WTC11 (cell line): ENCODE measurements at regions of chr5 and their contacts with region 1.

Region 1: GRCh38 chr5:80569961-80570786 is at the start of gene ANKRD34B:
- DNase-seq: peak; percentile 80
- ATAC-seq: peak; percentile 80
- H3K4me3 Mint-ChIP-seq: peak within 1 kb of the TSS; percentile 70
- H3K27ac Mint-ChIP-seq: no peak within 1 kb of the TSS
- H3K4me1 Mint-ChIP-seq: peaks cover 8% of the 10 kb centered on the region; the same call in 1 of the 2 replicates
- H3K27me3 Mint-ChIP-seq: peaks cover 96% of the 10 kb centered on the region
- CTCF ChIP-seq: no peak
- total RNA-seq, gene ANKRD34B: 1.6 to 3.6 TPM (median 3.4 TPM) in 3 replicates

Region 2: DNA sequence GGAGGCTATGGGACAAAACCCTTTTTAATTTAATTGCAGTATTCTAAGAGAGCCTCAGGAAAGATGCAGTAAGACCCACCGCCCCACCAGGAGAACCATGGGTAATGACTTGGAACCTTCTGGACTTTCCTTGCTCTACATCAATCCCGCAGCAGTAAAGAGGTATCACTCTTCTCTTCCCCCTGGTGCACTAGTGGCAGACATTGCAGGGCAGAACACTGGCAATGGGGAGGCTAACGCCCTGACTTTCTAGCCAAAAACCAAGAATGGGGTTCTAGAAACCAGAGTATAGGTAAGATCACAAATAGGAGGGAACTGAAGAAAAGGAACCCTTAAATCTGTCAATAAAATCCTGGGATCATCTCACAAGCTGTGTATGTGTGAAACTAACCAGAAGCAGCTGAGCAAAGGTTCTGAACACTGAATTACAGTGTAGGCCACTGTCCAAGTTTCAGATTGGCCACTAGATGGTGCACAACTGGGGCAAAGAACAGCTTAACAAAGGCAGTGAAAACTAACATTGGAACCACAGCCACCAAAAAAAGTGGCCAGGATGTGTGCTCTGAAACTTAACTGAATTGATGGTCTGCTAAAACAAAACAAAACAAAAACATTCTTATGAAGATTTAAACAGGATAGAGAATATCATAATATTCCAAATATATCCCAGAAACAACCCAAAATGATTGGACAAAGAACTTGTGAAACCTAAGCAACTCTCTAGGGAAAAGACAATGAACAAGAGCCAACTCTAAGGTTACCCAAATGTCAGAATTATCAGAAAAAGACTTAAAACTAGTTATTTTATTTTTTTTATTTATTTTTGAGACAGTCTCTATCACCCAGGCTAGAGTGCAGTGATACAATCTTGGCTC is 88.9 kb before region 1 on chr5:
- CTCF ChIA-PET with region 1: interaction called, 17 read pairs
- POLR2A ChIA-PET with region 1: interaction called, 5 read pairs
- DNase-seq: peak; percentile 34
- ATAC-seq: peak; percentile 90
- H3K4me3 Mint-ChIP-seq: no peak overlapping the region
- H3K27ac Mint-ChIP-seq: peak overlapping the region; percentile 79
- H3K4me1 Mint-ChIP-seq: peaks cover 19% of the 10 kb centered on the region
- H3K27me3 Mint-ChIP-seq: no peaks in the 10 kb centered on the region
- CTCF ChIP-seq: peak; percentile 42; the same call in 1 of the 2 replicates

Region 3: GRCh38 chr5:80487829-80488721 is 82.1 kb before region 1 on chr5 and contains the start of gene FAM151B:
- CTCF ChIA-PET with region 1: interaction called, 5 read pairs
- POLR2A ChIA-PET with region 1: interaction called, 11 read pairs
- DNase-seq: peak; percentile 96
- ATAC-seq: peak; percentile 94
- H3K4me3 Mint-ChIP-seq: peak within 1 kb of the TSS; percentile 82
- H3K27ac Mint-ChIP-seq: peak within 1 kb of the TSS; percentile 98
- H3K4me1 Mint-ChIP-seq: peaks cover 48% of the 10 kb centered on the region
- H3K27me3 Mint-ChIP-seq: no peaks in the 10 kb centered on the region
- CTCF ChIP-seq: no peak
- total RNA-seq, gene FAM151B: 0.48 to 0.94 TPM (median 0.62 TPM) in 3 replicates

Region 4: DNA sequence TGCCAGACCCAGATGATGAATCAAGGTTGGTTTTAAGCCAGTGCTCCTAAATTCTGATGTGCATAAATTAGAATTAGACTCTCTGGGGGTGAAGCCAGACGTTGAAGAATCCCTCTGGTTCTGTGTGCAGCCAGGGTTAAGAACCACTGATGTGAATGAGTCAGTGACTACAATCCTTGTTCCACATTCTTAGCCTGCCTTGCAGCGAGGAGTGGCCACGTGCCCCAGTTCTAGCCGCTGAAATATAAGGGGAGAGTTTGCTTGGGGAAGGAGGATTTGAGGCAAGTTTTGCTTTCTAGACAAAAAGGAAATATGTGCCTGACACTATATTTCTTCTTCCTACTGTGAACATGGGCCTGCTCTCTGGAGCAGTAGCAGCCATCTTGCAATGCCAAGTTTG is 50.0 kb after region 1 on chr5:
- CTCF ChIA-PET with region 1: no interaction called
- POLR2A ChIA-PET with region 1: no interaction called
- DNase-seq: no peak
- ATAC-seq: no peak
- H3K4me3 Mint-ChIP-seq: no peak overlapping the region
- H3K27ac Mint-ChIP-seq: no peak overlapping the region
- H3K4me1 Mint-ChIP-seq: no peaks in the 10 kb centered on the region
- H3K27me3 Mint-ChIP-seq: no peaks in the 10 kb centered on the region
- CTCF ChIP-seq: no peak

Region 5: DNA sequence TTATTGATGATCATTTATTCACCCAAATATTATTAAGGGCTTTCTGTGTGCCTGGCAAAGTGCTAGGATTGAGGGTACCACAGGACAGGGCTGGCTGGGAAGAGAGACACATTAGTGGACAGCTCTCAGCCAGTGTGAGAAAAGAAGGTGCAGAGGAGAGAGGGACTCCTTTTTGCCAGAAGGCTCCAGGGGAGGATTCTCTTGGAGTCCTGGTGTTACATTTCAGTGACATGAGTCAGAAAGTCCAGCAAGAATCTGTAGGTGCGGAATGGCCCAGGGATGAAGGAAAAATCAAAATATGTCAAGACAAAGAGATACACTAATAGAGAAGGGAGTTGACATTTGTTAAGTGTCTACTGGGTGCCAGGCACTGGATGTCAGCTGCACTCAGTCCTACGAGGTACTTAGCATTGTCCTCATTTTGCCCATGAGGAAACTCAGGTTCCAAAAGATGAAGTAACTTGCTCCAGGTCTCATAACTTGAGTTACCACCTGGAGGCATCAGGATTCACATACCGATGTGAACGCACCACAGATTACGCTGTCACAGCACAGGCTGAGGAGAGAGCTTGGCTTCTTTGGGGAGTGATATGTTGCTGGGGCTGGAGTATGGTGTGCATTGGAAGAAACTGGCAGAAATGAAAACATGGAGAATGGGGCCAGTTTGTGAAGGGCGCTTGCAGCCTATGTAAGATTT is 450.5 kb after region 1 on chr5:
- CTCF ChIA-PET with region 1: no interaction called
- POLR2A ChIA-PET with region 1: no interaction called
- DNase-seq: no peak
- ATAC-seq: no peak
- H3K4me3 Mint-ChIP-seq: no peak overlapping the region
- H3K27ac Mint-ChIP-seq: no peak overlapping the region
- H3K4me1 Mint-ChIP-seq: peaks cover 15% of the 10 kb centered on the region
- H3K27me3 Mint-ChIP-seq: no peaks in the 10 kb centered on the region
- CTCF ChIP-seq: no peak